Activated B cell treated with CpG ODN at 0.5 μM for 24 hours (primary cell): ENCODE measurements at regions of chr14 and their contacts with region 1.

Region 1: GRCh38 chr14:105045710-105046326 is 19.4 kb downstream of the GPR132 start:
- DNase-seq: peak; percentile 93
- ATAC-seq: peak; percentile 90
- H3K4me3 Mint-ChIP-seq: peak overlapping the region; percentile 46
- H3K27ac Mint-ChIP-seq: peak overlapping the region; percentile 59
- H3K4me1 Mint-ChIP-seq: peaks cover 15% of the 10 kb centered on the region
- H3K27me3 Mint-ChIP-seq: no peaks in the 10 kb centered on the region
- CTCF ChIP-seq: peak; percentile 97

Region 2: DNA sequence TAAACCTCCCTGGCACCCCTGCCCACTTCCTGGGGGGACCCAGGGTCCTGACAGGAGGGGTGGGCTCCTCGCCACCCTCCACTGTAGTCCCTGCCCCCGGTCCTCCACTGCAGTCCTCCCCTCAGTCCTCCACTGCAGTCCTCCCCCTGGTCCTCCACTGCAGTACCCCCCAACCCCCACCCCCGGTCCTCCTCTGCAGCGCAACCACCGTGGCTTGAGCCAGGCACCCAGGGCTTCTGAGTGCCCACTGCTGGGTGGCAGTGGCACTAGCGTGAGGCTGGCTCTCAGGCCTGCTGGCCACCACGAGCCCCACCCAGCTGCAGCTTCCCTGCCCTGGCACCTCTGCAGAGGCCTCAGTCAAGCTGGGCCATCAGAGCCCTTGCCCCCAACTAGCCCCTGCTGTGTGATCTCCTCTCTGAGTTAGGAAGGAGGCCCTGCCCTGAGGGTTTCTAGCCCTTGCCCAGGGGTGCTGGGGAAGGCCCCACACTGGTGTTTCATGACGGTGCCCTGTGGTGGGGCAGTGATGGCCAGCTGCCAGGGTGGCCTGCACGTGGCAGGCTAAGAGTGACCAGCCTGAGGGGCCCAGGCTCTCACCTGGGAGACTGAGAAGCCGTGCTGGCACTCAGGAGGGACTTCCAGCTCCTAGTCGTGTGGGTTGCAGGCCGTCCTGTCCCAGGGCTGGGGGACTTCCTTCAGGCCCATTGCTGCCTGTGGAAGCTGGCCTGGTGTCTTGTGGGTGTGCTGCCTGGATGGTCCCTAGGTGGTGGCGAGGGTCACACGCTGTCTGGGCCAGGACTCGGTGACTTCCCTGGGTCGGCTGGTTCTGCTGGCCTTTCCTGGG is 171.0 kb before region 1 on chr14:
- CTCF ChIA-PET with region 1: no interaction called
- POLR2A ChIA-PET with region 1: no interaction called
- intact Hi-C with region 1: no loop called
- DNase-seq: no peak
- ATAC-seq: no peak
- H3K4me3 Mint-ChIP-seq: no peak overlapping the region
- H3K27ac Mint-ChIP-seq: no peak overlapping the region
- H3K4me1 Mint-ChIP-seq: peaks cover 10% of the 10 kb centered on the region
- H3K27me3 Mint-ChIP-seq: peaks cover 13% of the 10 kb centered on the region
- CTCF ChIP-seq: no peak

Region 3: DNA sequence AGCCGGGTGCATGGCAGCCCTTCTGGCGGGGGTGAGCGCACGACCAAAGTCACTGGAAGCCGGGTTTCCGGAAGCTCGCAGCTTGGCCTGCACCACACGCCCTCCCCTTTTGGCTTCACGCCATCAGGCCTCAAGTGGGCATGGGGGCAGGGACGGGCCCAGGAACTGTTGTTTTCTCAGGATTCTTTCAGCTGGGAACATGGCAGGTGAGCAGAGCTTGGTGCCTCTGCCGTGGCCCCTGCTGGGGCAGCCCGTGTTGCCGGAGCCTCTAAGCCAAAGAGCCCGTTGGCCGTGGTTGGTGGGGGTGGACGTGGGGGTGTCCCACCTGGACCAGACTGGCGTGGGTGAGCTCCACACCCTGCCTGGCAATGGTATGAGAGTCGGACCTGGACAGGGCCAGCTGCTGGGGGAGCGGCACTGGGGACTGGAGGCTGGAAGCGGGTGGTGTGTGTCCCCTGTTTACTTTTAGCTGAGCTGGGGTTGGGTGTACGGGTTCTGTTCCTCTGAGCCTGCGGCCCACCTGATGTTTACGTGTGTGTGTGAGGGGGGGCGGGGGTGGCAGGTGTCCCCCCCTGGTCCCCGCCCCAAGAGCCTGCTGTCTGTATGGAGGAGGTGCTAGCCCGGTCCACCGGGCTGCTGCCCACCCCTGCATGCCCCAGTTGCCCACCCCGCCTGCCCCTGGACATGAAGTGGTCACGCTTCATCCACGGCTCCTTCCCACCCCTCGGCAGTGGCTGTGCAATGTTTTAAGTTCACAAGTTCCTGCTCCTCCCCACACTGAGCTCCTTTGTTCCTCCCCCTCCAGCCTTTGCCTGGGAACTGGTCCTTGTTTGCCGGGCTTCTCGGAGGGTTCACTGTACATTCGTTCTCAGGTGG is 149.8 kb before region 1 on chr14:
- CTCF ChIA-PET with region 1: interaction called, 6 read pairs
- POLR2A ChIA-PET with region 1: no interaction called
- intact Hi-C with region 1: loop called (anchors 1 kb)
- DNase-seq: no peak
- ATAC-seq: no peak
- H3K4me3 Mint-ChIP-seq: no peak overlapping the region
- H3K27ac Mint-ChIP-seq: no peak overlapping the region
- H3K4me1 Mint-ChIP-seq: peaks cover 6% of the 10 kb centered on the region
- H3K27me3 Mint-ChIP-seq: peaks cover 5% of the 10 kb centered on the region
- CTCF ChIP-seq: no peak

Region 4: DNA sequence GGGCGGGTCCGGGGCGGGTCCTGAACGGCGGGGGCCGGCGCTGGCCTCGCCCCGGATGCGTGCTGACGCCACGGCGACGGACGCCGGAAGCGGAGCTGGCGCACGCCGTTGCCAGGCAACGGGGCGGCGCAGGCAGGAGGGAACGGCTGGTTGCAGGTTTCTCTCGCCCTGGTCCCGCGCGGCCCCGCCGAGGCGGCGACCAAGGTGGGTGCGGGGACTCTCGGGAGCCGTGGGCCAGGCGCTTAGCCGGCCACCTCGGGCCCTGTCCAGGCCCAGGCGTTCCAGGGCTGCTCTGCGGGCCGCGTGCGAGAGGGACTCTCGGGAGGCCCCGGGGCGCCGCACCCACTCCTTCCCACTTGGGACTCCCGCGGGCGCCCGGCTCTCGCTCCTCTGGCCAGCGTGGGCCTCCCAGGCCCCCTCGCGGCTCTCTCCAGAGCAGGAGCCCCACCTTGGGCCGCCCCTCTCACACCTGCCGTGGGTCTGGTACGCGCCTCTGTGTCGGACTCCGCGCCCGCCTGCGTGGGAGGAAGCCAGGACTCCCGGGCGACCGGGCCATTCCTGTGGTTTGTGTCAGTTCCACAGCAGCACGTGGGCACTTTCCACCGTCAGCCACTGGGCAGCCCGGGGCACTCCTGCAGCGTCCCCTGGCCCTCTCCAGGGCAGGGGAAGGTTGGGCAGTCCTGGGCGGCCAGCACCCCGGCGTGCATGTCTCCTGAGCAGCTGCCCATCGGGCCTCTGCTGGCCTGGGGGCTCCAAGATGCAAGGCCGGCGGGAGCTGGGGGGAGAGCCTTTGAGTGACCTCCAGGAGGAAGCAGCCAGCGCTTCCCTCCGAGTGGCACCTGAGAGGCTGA is 59.9 kb before region 1 on chr14 and contains the start of gene CLBA1:
- CTCF ChIA-PET with region 1: interaction called, 3 read pairs
- POLR2A ChIA-PET with region 1: interaction called, 14 read pairs
- intact Hi-C with region 1: no loop called
- DNase-seq: peak; percentile 88
- ATAC-seq: peak; percentile 92
- H3K4me3 Mint-ChIP-seq: peak within 1 kb of the TSS; percentile 72
- H3K27ac Mint-ChIP-seq: peak within 1 kb of the TSS; percentile 71
- H3K4me1 Mint-ChIP-seq: peaks cover 11% of the 10 kb centered on the region
- H3K27me3 Mint-ChIP-seq: peaks cover 5% of the 10 kb centered on the region
- CTCF ChIP-seq: no peak
- total RNA-seq, gene CLBA1: 2.7 and 3.9 TPM in 2 replicates

Region 5: DNA sequence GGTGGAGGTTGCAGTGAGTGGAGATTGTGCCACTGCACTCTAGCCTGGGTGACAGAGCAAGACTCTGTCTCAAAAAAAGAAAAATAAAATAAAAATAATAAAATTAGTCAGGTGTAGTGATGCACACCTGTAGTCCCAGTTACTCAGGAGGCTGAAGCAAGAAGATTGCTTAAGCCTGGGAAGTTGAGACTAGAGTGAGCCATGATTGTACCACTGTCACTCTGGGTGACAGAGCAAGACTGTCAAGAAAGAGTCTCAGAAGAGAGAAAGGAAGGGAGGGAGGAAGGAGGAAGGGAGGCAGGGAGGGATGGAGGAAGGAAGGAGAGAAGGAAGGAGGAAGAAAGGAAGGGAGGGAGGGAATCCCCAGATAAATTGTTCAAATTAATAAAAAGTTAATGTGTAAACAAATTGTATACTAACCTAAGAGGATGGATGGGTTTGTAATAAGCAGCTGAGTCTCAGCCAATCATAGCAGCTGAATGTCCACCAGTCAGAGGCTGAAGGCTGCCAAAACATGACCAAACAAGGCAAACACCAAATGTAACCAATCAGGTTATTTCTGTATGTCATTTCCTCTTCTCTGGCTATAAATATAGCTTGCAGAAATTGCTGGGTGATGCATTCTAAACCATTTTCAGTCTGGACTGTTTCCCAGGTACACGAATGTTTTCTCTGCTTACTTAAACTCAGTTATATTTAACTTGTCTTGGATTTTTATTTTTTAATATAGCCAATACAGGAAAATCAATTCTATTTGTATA is 18.8 kb before region 1 on chr14:
- CTCF ChIA-PET with region 1: interaction called, 11 read pairs
- POLR2A ChIA-PET with region 1: no interaction called
- intact Hi-C with region 1: loop called (anchors 1 kb)
- DNase-seq: no peak
- ATAC-seq: no peak
- H3K4me3 Mint-ChIP-seq: no peak overlapping the region
- H3K27ac Mint-ChIP-seq: no peak overlapping the region
- H3K4me1 Mint-ChIP-seq: peaks cover 32% of the 10 kb centered on the region
- H3K27me3 Mint-ChIP-seq: no peaks in the 10 kb centered on the region
- CTCF ChIP-seq: no peak

Region 6: DNA sequence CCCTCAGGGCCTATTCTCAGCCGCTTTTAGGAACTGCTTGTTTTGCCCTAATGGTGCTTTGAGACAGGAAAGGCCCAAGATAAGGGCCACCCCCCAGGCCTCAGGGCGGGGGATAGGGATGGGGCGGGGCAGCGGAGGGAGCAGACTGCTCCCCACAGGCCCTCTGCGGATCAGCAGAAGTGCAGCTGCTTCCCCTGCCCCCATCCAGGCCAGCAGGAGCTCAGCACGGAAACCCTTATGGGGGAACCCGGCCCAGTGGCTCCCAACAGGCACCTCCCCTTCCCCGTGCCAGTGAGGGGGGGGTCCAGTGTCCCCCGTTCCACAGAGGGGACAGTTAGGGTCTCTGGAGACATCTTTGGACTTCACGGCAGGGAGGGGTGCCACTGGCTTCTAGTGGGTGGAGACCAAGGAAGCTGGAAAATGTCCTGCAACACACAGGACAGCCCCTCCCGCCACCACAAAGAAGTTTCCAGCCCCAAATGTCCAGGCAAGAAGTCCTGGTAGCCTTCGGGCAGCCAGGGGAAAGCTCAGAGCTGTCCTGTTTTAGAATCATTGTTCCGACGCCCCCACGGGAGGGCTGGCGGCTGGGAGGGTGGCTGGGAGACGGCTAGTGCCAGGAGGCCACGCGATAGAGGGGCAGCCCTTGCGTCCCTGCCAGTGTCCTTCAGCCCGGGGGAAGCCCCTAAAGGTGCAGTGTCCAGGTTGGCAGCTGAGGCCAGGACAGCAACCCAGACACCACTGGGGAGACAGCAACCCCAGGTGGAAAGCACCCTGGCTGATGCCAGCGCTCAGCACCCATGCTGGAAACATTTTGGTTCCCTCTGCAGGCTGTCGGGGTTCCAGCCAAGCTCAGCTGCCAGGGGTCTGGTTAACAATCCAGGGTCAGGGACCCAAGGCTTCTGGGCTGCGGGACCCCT is 29.8 kb after region 1 on chr14:
- CTCF ChIA-PET with region 1: interaction called, 12 read pairs
- POLR2A ChIA-PET with region 1: interaction called, 4 read pairs
- intact Hi-C with region 1: no loop called
- DNase-seq: peak; percentile 40
- ATAC-seq: peak; percentile 62
- H3K4me3 Mint-ChIP-seq: no peak overlapping the region
- H3K27ac Mint-ChIP-seq: no peak overlapping the region
- H3K4me1 Mint-ChIP-seq: peaks cover 48% of the 10 kb centered on the region
- H3K27me3 Mint-ChIP-seq: no peaks in the 10 kb centered on the region
- CTCF ChIP-seq: no peak

Region 7: GRCh38 chr14:105203057-105203531 is 157.3 kb after region 1 on chr14:
- CTCF ChIA-PET with region 1: no interaction called
- POLR2A ChIA-PET with region 1: no interaction called
- intact Hi-C with region 1: no loop called
- DNase-seq: peak; percentile 69
- ATAC-seq: peak; percentile 54
- H3K4me3 Mint-ChIP-seq: no peak overlapping the region
- H3K27ac Mint-ChIP-seq: no peak overlapping the region
- H3K4me1 Mint-ChIP-seq: peaks cover 15% of the 10 kb centered on the region
- H3K27me3 Mint-ChIP-seq: peaks cover 23% of the 10 kb centered on the region
- CTCF ChIP-seq: peak; percentile 76